ENCODE measurements at regions of chr19 and their contacts with region 1.

Region 1: GRCh38 chr19:58203814-58204475 is 21.1 kb downstream of the ZNF274 start:
- DNase-seq: no peak
- ATAC-seq: no peak
- H3K4me3 ChIP-seq: no peak overlapping the region
- H3K27ac ChIP-seq: no peak overlapping the region
- H3K4me1 ChIP-seq: no peaks in the 10 kb centered on the region
- H3K27me3 ChIP-seq: no peaks in the 10 kb centered on the region
- CTCF ChIP-seq: no peak

Region 2: GRCh38 chr19:58252102-58252685 is 48.2 kb after region 1 on chr19:
- intact Hi-C with region 1: loop called in 1 of 2 experiments (anchors 10 kb)
- DNase-seq: no peak
- ATAC-seq: no peak
- H3K4me3 ChIP-seq: no peak overlapping the region
- H3K27ac ChIP-seq: no peak overlapping the region
- H3K4me1 ChIP-seq: no peaks in the 10 kb centered on the region
- H3K27me3 ChIP-seq: no peaks in the 10 kb centered on the region
- CTCF ChIP-seq: no peak

Region 3: DNA sequence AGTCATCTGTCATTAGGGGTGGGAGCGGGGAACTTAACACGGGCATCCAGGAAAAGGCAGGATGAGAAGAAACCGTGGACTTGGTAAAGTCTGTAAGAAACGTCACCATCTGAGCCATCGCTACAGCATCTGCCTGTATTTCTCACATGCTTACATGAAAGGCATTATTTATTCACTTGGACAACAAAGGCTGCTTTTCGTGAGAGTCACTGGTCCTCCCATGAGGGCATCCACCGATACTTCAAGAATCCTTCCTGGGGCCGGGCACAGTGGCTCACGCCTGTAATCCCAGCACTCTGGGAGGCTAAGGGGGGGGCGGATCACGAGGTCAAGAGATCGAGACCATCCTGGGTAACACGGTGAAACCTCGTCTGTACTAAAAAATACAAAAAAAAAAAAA is 288.3 kb after region 1 on chr19:
- intact Hi-C with region 1: no loop called
- DNase-seq: peak in 1 of 4 donors; percentile 34
- ATAC-seq: no peak
- H3K4me3 ChIP-seq: no peak overlapping the region
- H3K27ac ChIP-seq: no peak overlapping the region
- H3K4me1 ChIP-seq: no peaks in the 10 kb centered on the region
- H3K27me3 ChIP-seq: no peaks in the 10 kb centered on the region
- CTCF ChIP-seq: no peak

Measured in left lung (tissue), 14 donors.